ENCODE measurements at regions of chr3 and their contacts with region 1.

Region 1: DNA sequence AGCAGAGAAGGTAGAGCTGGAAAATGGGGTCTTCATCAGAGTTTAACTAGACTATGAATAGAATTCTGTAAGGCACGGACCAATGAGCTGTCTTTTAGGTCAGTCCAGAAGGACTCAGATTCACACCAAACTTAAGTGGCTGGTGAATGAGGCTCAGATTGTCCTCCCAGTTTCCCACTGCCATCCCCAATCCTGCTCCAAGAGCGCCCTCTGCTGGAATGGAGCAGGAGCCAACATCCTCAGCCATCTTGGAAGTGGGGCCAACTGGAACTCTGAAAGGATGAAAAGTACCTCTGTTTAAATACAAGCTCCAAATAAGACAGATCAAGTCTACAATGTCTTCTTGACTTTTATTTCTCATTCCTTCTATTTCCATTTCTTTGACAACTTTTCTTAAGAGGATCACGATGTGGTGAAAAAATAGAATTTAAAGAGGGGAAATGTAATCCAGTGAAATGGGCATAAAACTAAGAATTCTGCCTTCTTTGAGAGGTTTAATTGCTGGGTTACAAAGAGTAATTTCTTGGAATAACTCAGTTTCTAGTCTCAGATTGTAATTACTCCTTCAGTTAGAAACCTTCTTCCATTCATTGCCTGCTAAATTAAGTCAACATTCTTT is 217.1 kb upstream of the TPRG1 start:
- DNase-seq: peak; percentile 25 to 84 (median 58)
- ATAC-seq: peak; percentile 64 to 82 (median 76)
- H3K4me3 ChIP-seq: no peak overlapping the region
- H3K4me3 Mint-ChIP-seq: no peak overlapping the region
- H3K27ac ChIP-seq: no peak overlapping the region
- H3K27ac Mint-ChIP-seq: no peak overlapping the region
- H3K4me1 ChIP-seq: no peaks in the 10 kb centered on the region
- H3K4me1 Mint-ChIP-seq: peaks cover 0 to 7% (median 5%) of the 10 kb centered on the region in 3 donors
- H3K27me3 ChIP-seq: no peaks in the 10 kb centered on the region
- H3K27me3 Mint-ChIP-seq: no peaks in the 10 kb centered on the region

Region 2: GRCh38 chr3:188214442-188214841 is 740.3 kb before region 1 on chr3:
- CTCF ChIA-PET with region 1: no interaction called
- POLR2A ChIA-PET with region 1: no interaction called
- DNase-seq: peak in 1 of 35 experiments; percentile 3
- ATAC-seq: no peak
- H3K4me3 ChIP-seq: no peak overlapping the region
- H3K4me3 Mint-ChIP-seq: no peak overlapping the region
- H3K27ac ChIP-seq: no peak overlapping the region
- H3K27ac Mint-ChIP-seq: no peak overlapping the region
- H3K4me1 ChIP-seq: peaks cover 4 to 10% of the 10 kb centered on the region in 2 experiments
- H3K4me1 Mint-ChIP-seq: peaks cover 25 to 36% (median 26%) of the 10 kb centered on the region in 3 donors
- H3K27me3 ChIP-seq: no peaks in the 10 kb centered on the region
- H3K27me3 Mint-ChIP-seq: no peaks in the 10 kb centered on the region

Region 3: GRCh38 chr3:188468662-188469061 is 486.0 kb before region 1 on chr3:
- CTCF ChIA-PET with region 1: no interaction called
- POLR2A ChIA-PET with region 1: no interaction called
- DNase-seq: no peak
- ATAC-seq: no peak
- H3K4me3 ChIP-seq: no peak overlapping the region
- H3K4me3 Mint-ChIP-seq: no peak overlapping the region
- H3K27ac ChIP-seq: no peak overlapping the region
- H3K27ac Mint-ChIP-seq: no peak overlapping the region
- H3K4me1 ChIP-seq: no peaks in the 10 kb centered on the region
- H3K4me1 Mint-ChIP-seq: peaks cover 0 to 12% (median 8%) of the 10 kb centered on the region in 3 donors
- H3K27me3 ChIP-seq: no peaks in the 10 kb centered on the region
- H3K27me3 Mint-ChIP-seq: no peaks in the 10 kb centered on the region

Region 4: GRCh38 chr3:188749010-188749617 is 205.6 kb before region 1 on chr3:
- CTCF ChIA-PET with region 1: interaction called, 4 to 27 read pairs
- POLR2A ChIA-PET with region 1: no interaction called
- DNase-seq: peak in 33 of 35 experiments; percentile 8 to 81 (median 42)
- ATAC-seq: peak; percentile 73 to 76 (median 74)
- H3K4me3 ChIP-seq: no peak overlapping the region
- H3K4me3 Mint-ChIP-seq: no peak overlapping the region
- H3K27ac ChIP-seq: no peak overlapping the region
- H3K27ac Mint-ChIP-seq: no peak overlapping the region
- H3K4me1 ChIP-seq: no peaks in the 10 kb centered on the region
- H3K4me1 Mint-ChIP-seq: peaks cover 0 to 10% (median 0%) of the 10 kb centered on the region in 3 donors
- H3K27me3 ChIP-seq: no peaks in the 10 kb centered on the region
- H3K27me3 Mint-ChIP-seq: no peaks in the 10 kb centered on the region

Region 5: DNA sequence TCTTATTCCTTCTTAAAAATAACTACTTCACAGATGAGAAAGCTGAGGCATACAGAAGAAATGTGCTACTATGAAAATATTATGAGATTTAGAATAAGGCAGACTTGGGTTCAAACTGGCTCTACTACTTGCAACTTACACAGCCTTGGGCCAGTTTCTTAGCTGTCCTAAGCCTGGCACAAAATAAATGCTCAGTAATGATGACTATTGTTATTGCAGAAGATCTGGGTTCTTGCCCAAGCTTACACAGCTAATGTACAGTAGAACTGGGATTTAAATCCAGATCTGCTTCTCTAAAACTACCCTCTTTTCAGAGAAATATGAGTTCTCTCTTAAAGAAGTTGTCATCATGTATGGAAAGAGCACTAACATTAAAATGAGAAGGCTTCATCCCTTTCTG is 11.1 kb before region 1 on chr3:
- CTCF ChIA-PET with region 1: interaction called, 3 to 10 read pairs
- POLR2A ChIA-PET with region 1: no interaction called
- DNase-seq: no peak
- ATAC-seq: no peak
- H3K4me3 ChIP-seq: no peak overlapping the region
- H3K4me3 Mint-ChIP-seq: no peak overlapping the region
- H3K27ac ChIP-seq: no peak overlapping the region
- H3K27ac Mint-ChIP-seq: no peak overlapping the region
- H3K4me1 ChIP-seq: peaks cover 0 to 6% of the 10 kb centered on the region in 2 experiments
- H3K4me1 Mint-ChIP-seq: peaks cover 0 to 3% (median 0%) of the 10 kb centered on the region in 3 donors
- H3K27me3 ChIP-seq: peaks cover 0 to 21% of the 10 kb centered on the region in 2 experiments
- H3K27me3 Mint-ChIP-seq: peaks cover 6 to 8% of the 10 kb centered on the region in 2 donors

Region 6: DNA sequence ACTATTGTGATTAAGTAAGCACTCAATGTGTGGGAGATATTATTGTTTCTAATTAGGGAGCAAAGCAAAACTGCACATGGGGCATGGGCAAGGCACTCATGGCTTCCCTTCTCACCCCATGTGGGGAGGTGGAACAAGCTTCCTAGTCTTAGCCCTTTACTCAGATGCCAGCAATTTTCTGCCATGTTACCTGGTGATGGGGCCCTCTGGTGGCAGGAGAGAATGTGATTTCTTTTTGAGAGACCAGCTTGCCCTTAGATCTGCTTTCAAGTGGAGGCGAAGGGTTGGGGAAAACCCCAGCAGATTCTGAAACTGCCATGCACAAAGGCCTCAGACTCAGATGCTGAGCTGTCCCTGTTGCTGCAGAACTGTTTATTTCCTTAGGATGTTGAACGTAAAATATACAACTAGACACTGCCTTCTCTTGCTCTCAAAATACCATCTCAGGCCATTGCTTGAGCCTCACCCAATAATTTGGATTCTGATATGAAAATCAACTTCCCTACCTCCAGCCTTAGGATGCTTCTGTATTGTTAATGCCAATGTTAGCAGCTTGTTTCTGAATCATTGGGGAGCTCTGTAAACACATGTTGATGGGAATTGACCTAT is 86.9 kb after region 1 on chr3:
- CTCF ChIA-PET with region 1: interaction called, 6 to 19 read pairs
- POLR2A ChIA-PET with region 1: no interaction called
- DNase-seq: peak; percentile 44 to 86 (median 66)
- ATAC-seq: peak; percentile 98 to 100 (median 100)
- H3K4me3 ChIP-seq: no peak overlapping the region
- H3K4me3 Mint-ChIP-seq: no peak overlapping the region
- H3K27ac ChIP-seq: peak overlapping the region; percentile 55
- H3K27ac Mint-ChIP-seq: peak overlapping the region; percentile 79 to 83
- H3K4me1 ChIP-seq: peaks cover 2 to 5% of the 10 kb centered on the region in 2 experiments
- H3K4me1 Mint-ChIP-seq: peaks cover 9 to 14% (median 13%) of the 10 kb centered on the region in 3 donors
- H3K27me3 ChIP-seq: no peaks in the 10 kb centered on the region
- H3K27me3 Mint-ChIP-seq: no peaks in the 10 kb centered on the region